ENCODE measurements at regions of chr16 and their contacts with region 1.

Region 1: GRCh38 chr16:57115514-57116182 is 23.3 kb downstream of the CPNE2 start:
- DNase-seq: no peak
- CTCF ChIP-seq: no peak

Region 2: DNA sequence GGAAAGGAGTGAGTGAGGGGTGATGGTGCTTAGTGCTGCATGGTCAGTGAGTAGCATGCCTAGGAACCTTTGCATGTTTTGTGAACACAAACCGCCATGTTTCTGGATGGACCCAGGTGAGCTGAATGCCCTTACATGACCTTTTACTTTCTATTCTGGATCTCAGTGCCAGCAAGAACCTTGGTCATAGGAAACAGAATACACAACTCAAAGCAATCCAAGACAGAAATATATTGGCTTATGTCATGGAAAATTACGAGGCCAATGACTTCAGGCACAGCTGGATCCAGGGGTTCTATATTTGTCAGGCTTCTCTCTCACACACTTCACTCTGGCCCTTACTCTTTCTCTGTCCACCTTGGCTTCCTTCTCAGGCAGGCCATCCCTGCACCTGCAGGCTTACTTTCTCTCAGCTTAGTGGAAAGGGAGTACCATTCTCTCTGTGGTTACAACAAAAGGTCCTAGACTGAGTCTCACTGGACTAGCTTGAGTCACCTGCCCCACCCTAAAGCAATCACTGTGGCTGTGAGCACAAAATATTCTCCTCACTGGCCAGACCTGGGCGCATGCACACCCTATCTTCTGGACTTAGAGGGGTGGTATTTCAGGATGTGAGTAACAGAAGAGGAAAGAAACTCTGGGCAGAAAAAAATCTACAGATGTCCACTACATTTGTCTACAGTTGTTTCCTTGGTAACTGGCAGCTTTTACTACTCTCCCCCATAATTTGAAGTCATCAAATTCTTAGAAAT is 43.6 kb before region 1 on chr16:
- CTCF ChIA-PET with region 1: no interaction called
- POLR2A ChIA-PET with region 1: no interaction called
- DNase-seq: no peak
- CTCF ChIP-seq: no peak

Region 3: DNA sequence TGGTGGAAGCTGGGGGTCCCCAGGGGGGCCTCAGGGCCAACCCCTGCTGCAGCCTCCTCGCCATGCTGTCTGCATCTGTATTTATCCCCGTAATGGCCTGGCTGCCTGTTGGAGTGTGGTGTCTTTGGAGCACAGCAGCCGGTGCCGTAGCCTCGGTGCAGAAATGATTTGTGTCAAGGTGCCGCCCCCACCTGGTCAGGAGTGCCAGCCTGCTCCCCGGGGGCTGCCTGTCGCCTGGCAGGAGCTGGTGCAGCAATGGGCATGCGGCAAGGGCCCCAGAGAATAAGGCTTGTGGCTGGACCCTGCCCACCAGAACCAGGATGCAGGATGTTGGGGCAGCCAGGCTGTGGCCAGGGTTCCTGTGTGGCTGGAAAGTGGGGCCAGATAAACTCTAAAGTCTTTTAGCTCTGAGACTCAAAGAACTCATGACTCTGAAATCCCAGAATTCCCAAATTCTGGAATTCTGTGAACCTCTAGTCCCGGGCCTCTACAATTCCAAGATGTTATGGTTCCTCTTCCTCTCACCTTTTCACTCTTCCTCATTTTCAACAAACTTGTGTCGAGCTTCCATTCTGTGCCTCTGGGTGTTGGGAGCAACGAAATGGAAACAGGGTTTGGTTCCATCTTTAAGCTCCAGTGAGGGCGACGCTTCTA is 17.3 kb before region 1 on chr16:
- CTCF ChIA-PET with region 1: interaction called, 41 read pairs
- POLR2A ChIA-PET with region 1: interaction called, 3 read pairs
- DNase-seq: no peak
- CTCF ChIP-seq: no peak